Caco-2 (cell line): ENCODE measurements at regions of chr4 and their contacts with region 1.

Region 1: GRCh38 chr4:77819843-77820648 is 878 bp upstream of the CNOT6L start:
- DNase-seq: peak; percentile 82 to 89
- H3K4me3 ChIP-seq: peak overlapping the region; percentile 93
- H3K4me3 Mint-ChIP-seq: peak overlapping the region; percentile 96
- H3K27ac Mint-ChIP-seq: peak overlapping the region; percentile 91
- H3K4me1 ChIP-seq: peaks cover 7% of the 10 kb centered on the region
- H3K4me1 Mint-ChIP-seq: no peaks in the 10 kb centered on the region
- H3K27me3 ChIP-seq: no peaks in the 10 kb centered on the region
- H3K27me3 Mint-ChIP-seq: peaks cover 5% of the 10 kb centered on the region
- CTCF ChIP-seq: no peak

Region 2: DNA sequence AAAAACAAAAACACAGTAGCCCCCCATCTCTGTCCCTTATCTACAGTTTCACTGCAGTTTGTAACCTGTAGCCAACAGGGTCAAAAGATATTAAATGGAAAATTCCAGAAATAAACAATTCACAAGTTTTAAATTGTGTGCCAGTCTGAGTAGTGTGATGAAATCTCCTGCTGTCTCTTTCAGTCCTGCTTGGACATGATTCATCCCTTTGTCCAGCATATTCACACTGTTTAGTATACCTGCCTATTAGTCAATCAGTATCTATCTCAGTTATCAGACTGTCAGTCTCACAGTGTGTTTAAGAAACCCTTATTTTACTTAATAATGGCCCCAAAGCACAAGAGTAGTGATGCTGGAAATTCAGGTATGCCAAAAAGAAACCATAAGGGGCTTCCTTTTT is 22.8 kb before region 1 on chr4:
- CTCF ChIA-PET with region 1: no interaction called
- POLR2A ChIA-PET with region 1: no interaction called
- intact Hi-C with region 1: no loop called
- DNase-seq: no peak
- H3K4me3 ChIP-seq: no peak overlapping the region
- H3K4me3 Mint-ChIP-seq: no peak overlapping the region
- H3K27ac Mint-ChIP-seq: no peak overlapping the region
- H3K4me1 ChIP-seq: no peaks in the 10 kb centered on the region
- H3K4me1 Mint-ChIP-seq: no peaks in the 10 kb centered on the region
- H3K27me3 ChIP-seq: no peaks in the 10 kb centered on the region
- H3K27me3 Mint-ChIP-seq: no peaks in the 10 kb centered on the region
- CTCF ChIP-seq: no peak

Region 3: DNA sequence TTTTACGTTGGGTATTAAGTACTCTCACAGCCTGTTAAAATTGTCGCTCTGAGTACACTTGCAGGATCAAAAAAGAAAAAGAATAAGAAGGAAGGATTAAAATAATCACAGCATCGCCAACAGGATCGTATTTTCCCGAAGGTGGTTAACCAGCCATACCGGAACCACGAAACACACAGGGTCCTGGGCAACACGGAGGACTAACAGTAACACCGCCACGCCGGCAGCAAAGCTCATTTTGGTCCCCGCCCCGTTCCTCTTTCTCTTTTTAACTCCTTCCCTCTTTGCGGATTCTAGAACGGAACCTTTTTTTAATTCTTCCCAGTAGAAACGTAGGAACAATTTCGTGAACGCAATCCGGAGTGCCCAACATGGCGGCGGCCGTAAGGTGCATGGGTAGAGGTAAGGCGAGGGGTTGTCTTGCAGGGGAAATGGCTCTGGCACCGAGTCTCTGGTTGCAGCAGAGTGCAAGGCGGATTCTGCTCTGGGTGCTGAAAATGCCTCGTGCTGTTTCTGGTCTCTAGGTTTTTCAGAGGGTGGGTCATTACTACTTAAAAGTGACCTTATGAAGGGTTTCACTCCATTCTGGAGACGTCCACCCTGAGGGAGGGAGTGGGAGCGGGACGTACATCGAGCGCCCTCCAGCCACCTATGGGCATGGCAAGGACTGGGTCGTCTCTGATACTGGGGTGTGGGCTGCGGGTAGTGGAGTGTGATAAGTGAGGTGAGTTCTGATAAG is 42.6 kb after region 1 on chr4 and contains the start of gene MRPL1:
- CTCF ChIA-PET with region 1: interaction called, 6 read pairs
- POLR2A ChIA-PET with region 1: interaction called, 6 read pairs
- intact Hi-C with region 1: loop called (anchors 1 kb)
- DNase-seq: peak; percentile 88 to 89
- H3K4me3 ChIP-seq: peak within 1 kb of the TSS; percentile 37
- H3K4me3 Mint-ChIP-seq: peak within 1 kb of the TSS; percentile 80
- H3K27ac Mint-ChIP-seq: peak within 1 kb of the TSS; percentile 86
- H3K4me1 ChIP-seq: no peaks in the 10 kb centered on the region
- H3K4me1 Mint-ChIP-seq: peaks cover 6% of the 10 kb centered on the region
- H3K27me3 ChIP-seq: no peaks in the 10 kb centered on the region
- H3K27me3 Mint-ChIP-seq: no peaks in the 10 kb centered on the region
- CTCF ChIP-seq: no peak
- total RNA-seq, gene MRPL1: 38.4 and 42.0 TPM in 2 replicates

Region 4: GRCh38 chr4:77893451-77893850 is 73.4 kb after region 1 on chr4:
- CTCF ChIA-PET with region 1: no interaction called
- POLR2A ChIA-PET with region 1: no interaction called
- intact Hi-C with region 1: no loop called
- DNase-seq: no peak
- H3K4me3 ChIP-seq: no peak overlapping the region
- H3K4me3 Mint-ChIP-seq: no peak overlapping the region
- H3K27ac Mint-ChIP-seq: no peak overlapping the region
- H3K4me1 ChIP-seq: no peaks in the 10 kb centered on the region
- H3K4me1 Mint-ChIP-seq: no peaks in the 10 kb centered on the region
- H3K27me3 ChIP-seq: no peaks in the 10 kb centered on the region
- H3K27me3 Mint-ChIP-seq: no peaks in the 10 kb centered on the region
- CTCF ChIP-seq: no peak

Region 5: DNA sequence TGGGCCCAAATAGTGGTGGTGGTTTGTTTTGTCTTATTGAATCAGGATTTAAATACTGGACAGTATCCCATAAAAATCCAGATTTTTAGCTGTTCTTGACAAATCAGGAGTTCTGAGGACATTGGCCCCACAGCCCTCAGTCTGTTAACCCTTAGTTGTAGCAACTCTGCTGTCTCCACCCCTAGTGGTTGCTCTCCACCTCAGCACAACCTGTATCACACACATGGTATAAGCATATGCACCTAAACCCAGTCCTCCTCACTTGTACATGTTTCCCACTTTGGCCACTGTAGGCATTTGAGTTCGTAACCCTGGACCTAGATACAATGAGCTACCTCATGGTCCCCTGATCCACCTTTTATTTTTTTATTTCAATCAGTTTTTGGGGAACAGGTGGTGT is 118.5 kb after region 1 on chr4:
- CTCF ChIA-PET with region 1: no interaction called
- POLR2A ChIA-PET with region 1: no interaction called
- intact Hi-C with region 1: no loop called
- DNase-seq: no peak
- H3K4me3 ChIP-seq: no peak overlapping the region
- H3K4me3 Mint-ChIP-seq: no peak overlapping the region
- H3K27ac Mint-ChIP-seq: no peak overlapping the region
- H3K4me1 ChIP-seq: no peaks in the 10 kb centered on the region
- H3K4me1 Mint-ChIP-seq: no peaks in the 10 kb centered on the region
- H3K27me3 ChIP-seq: no peaks in the 10 kb centered on the region
- H3K27me3 Mint-ChIP-seq: no peaks in the 10 kb centered on the region
- CTCF ChIP-seq: no peak